GM10248 (cell line): ENCODE measurements at regions of chr4 and their contacts with region 1.

Region 1: GRCh38 chr4:102705351-102705935 is 55.3 kb downstream of the MANBA start:
- DNase-seq: no peak
- CTCF ChIP-seq: no peak

Region 2: DNA sequence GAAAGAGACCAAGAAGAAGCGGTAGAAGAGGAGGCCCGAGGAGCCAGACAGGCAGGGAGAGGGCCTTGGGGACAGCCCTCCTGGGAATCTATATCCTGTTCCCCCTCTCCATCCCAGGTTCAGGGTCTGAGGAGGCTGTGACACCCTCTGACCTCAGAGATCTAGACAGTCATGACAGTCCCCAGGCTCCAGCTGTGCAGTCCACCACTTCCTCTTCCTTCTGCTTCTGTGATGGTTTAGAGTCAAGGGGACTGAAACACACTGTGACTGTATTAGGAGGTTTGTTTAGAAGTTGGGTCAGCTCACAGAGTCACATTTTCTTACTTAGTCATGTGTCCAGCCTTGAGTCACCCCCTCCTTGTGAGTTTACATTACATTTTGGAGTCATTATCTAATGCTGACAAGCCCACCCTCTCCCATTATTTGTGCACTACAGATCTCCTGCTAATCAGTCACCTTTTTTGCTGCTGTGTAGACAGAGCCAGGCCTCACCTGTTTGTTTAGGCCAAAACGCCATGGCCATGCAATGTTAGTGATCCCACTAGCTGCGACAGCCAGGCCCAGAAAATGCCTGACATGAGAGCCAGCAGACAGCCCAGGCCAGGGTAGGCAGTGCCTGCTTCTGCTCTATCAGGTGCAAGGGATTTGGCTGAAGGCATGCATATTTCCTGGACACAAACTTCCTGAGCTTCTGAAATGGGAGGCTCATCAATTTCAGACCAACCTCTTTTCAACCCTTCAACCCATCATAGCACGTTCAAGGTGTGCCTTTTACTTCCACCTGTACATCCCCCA is 29.3 kb after region 1 on chr4:
- CTCF ChIA-PET with region 1: interaction called, 12 read pairs
- POLR2A ChIA-PET with region 1: no interaction called
- DNase-seq: peak; percentile 69
- CTCF ChIP-seq: no peak